HepG2 (cell line): ENCODE measurements at regions of chr3 and their contacts with region 1.

Region 1: DNA sequence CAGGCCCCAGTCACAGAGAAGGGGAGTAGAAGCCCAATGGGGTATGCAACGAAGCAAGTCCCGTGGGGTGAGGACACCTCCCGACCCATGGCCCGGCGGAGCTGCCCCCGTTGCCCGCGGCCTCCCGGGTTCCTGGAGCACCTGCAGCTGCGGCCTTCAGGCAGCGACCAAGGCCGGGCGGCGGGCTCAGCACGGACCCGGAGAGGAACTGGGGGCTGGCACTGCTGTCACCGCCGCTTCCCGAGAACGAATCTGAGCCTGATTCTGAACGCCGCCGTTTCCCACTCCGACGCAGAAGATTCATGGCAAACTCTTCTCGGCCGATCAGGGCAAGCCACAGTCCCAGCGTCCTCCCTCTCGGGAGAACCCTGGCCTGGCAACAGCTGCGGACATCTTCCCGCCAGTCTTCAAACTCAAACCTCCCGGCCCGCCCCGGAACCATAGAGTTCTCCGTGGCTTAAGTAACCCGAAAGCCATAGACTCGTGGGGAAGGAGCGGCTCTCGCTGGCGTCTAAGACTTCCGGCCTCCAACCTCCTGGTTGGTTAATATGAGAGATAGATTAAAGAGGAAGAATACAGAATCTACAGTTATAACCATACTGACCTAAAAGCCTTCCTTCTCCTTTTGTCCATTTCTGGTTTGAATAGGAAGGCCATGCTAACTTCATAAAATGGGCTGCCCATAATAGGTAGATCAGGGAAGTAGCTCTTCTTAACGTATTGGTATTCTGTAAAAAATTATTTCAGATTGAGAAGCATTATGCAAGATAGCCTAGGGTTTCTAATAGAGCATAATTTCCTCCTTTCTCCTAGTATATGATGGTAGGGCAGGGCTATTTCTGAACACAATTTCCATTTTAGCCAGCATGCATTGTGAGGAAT is at the start of gene POLQ:
- DNase-seq: peak; percentile 87
- ATAC-seq: peak; percentile 97
- H3K4me3 ChIP-seq: peak within 1 kb of the TSS; percentile 81 to 96 (median 82)
- H3K27ac ChIP-seq: peak within 1 kb of the TSS; percentile 51
- H3K4me1 ChIP-seq: peaks cover 9% of the 10 kb centered on the region
- H3K27me3 ChIP-seq: no peaks in the 10 kb centered on the region; a peak in 1 of 5 replicates
- CTCF ChIP-seq: no peak
- EP300 ChIP-seq: peak in 1 of 2 experiments; percentile 21; a peak in 1 of 4 replicates
- POLR2A ChIP-seq: peak; percentile 49 to 63; a peak in 2 of 4 replicates
- RAD21 ChIP-seq: no peak
- total RNA-seq, gene POLQ: 16.0 and 18.6 TPM in 2 replicates

Region 2: GRCh38 chr3:121629601-121630000 is 83.8 kb after region 1 on chr3:
- CTCF ChIA-PET with region 1: no interaction called
- POLR2A ChIA-PET with region 1: no interaction called
- in situ Hi-C with region 1: no loop called
- intact Hi-C with region 1: no loop called
- DNase-seq: no peak
- ATAC-seq: no peak
- H3K4me3 ChIP-seq: no peak overlapping the region
- H3K27ac ChIP-seq: no peak overlapping the region
- H3K4me1 ChIP-seq: no peaks in the 10 kb centered on the region
- H3K27me3 ChIP-seq: peaks cover 0 to 3% of the 10 kb centered on the region in 2 experiments; a peak in 1 of 5 replicates
- CTCF ChIP-seq: no peak
- EP300 ChIP-seq: no peak
- POLR2A ChIP-seq: no peak
- RAD21 ChIP-seq: no peak

Region 3: DNA sequence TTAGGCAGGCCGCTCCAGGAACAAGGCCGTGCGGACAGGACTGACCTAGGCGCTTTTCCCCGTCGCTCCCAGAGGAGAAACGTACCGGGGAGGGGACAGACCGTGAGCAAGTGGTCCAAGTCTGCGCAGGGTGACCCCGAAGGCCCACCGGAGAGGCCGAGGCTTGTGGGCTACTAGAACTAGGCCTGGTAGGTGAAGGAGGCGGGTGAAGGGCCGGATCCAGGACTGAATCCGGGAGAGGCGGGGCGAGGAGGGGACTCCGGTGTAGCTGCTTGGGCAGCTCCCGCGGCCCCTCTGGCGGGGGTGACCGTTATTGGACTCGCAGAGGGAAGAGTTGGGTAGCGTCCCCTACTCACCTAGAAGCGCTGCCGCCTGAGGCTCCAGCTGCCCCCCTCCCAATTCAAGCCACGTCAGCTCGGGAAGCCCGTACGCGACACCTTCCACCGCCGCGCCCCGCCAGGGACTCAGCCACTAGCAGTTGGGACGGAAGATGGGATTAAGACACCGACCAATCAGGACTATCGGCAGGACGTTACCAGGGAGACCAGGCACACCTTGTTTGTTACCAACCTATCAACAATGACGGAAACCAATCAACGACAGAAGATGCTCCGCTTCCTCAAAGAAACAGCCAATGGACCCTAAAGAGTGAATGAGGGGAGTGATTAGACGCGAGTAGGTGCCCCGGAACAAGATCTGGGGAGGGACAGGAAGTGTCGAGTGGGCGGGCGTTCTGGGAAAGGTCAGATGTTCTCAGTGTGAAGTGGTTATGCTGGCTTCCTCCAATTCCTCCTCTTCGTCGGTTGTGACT is 203.7 kb after region 1 on chr3 and contains the start of gene GOLGB1:
- CTCF ChIA-PET with region 1: no interaction called
- POLR2A ChIA-PET with region 1: no interaction called
- in situ Hi-C with region 1: no loop called
- intact Hi-C with region 1: loop called (anchors 2 kb)
- DNase-seq: peak; percentile 100
- ATAC-seq: peak; percentile 98
- H3K4me3 ChIP-seq: peak within 1 kb of the TSS; percentile 90 to 97 (median 90)
- H3K27ac ChIP-seq: peak within 1 kb of the TSS; percentile 98
- H3K4me1 ChIP-seq: peaks cover 15% of the 10 kb centered on the region
- H3K27me3 ChIP-seq: no peaks in the 10 kb centered on the region; a peak in 1 of 5 replicates
- CTCF ChIP-seq: no peak
- EP300 ChIP-seq: no peak
- POLR2A ChIP-seq: peak; percentile 96 to 99
- RAD21 ChIP-seq: peak; percentile 53
- total RNA-seq, gene GOLGB1: 39.5 and 53.1 TPM in 2 replicates

Region 4: DNA sequence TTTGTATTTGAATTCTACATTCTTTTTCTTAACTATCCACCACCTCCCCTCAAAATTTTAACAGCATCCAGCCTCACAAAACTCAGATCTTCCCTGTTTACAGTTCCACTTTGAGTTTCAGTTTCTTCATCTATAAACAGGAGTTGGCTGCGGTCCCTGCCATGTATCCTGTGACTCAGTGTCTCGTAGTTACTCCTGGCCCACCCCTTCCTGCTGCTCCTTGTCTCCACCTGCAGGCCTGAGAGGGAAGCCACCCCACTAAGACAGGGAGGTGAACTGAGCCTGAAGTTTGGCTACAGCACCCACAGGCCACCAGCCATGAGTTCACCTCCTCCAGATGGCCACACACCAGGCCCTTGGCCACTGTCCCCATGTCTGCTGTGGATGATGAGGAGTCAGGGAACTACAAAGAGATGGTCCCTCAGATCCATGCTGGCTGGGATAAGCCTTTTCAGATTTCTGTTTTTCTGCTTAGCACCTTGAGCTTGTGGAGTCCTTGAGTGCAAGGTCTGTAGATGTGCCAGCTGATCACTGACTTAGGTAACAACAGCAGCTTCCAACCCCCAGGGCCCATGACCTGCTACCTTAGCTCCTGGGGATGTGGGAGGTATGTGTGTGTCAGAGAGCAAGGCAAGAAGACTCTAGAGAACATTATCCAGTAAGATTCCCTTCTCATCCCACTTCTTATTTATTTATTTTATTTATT is 546.8 kb after region 1 on chr3:
- CTCF ChIA-PET with region 1: no interaction called
- POLR2A ChIA-PET with region 1: no interaction called
- in situ Hi-C with region 1: no loop called
- intact Hi-C with region 1: loop called (anchors 2 kb)
- DNase-seq: no peak
- ATAC-seq: peak; percentile 65
- H3K4me3 ChIP-seq: no peak overlapping the region
- H3K27ac ChIP-seq: no peak overlapping the region
- H3K4me1 ChIP-seq: no peaks in the 10 kb centered on the region
- H3K27me3 ChIP-seq: peaks cover 3 to 6% of the 10 kb centered on the region in 2 experiments; a peak in 3 of 5 replicates
- CTCF ChIP-seq: peak; percentile 57
- EP300 ChIP-seq: no peak
- POLR2A ChIP-seq: no peak
- RAD21 ChIP-seq: no peak

Region 5: DNA sequence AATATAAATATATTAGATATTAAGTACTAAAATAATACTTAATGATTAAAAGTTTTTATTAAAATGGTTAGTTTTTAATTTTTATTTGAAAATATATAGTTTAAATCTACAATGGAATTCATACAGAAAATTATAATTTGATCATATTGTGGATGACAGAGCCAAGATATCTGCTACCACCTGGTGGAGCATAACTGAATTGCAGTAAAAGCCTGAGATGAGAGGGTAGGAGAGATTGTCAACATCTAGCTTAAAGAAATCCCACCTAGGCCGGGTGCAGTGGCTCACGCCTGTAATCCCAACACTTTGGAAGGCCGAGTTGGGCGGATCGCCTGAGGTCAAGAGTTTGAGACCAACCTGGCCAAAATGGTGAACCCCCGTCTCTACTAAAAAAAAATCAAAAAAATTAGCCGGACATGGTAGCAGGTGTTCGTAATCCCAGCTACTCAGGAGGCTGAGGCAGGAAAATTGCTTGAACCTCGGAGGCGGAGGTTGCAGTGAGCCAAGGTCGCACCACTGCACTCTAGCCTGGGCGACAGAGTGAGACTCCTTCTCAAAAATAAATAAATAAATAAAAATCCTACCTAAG is 754.2 kb after region 1 on chr3:
- CTCF ChIA-PET with region 1: interaction called, 7 read pairs
- POLR2A ChIA-PET with region 1: no interaction called
- in situ Hi-C with region 1: no loop called
- intact Hi-C with region 1: loop called (anchors 1 kb)
- DNase-seq: peak; percentile 33
- ATAC-seq: peak; percentile 31; the same call in 1 of the 3 replicates
- H3K4me3 ChIP-seq: no peak overlapping the region
- H3K27ac ChIP-seq: no peak overlapping the region
- H3K4me1 ChIP-seq: peaks cover 6% of the 10 kb centered on the region
- H3K27me3 ChIP-seq: no peaks in the 10 kb centered on the region
- CTCF ChIP-seq: peak; percentile 60
- EP300 ChIP-seq: no peak
- POLR2A ChIP-seq: no peak
- RAD21 ChIP-seq: no peak; the same call in 1 of the 2 replicates

Region 6: GRCh38 chr3:122679085-122679881 is 1133.5 kb after region 1 on chr3:
- CTCF ChIA-PET with region 1: interaction called, 3 read pairs
- POLR2A ChIA-PET with region 1: no interaction called
- in situ Hi-C with region 1: loop called (anchors 25 kb)
- intact Hi-C with region 1: loop called (anchors 10 kb)
- DNase-seq: peak; percentile 64
- ATAC-seq: peak; percentile 79
- H3K4me3 ChIP-seq: peak overlapping the region; percentile 90 to 97 (median 93)
- H3K27ac ChIP-seq: no peak overlapping the region
- H3K4me1 ChIP-seq: peaks cover 29% of the 10 kb centered on the region
- H3K27me3 ChIP-seq: no peaks in the 10 kb centered on the region; a peak in 1 of 5 replicates
- CTCF ChIP-seq: peak; percentile 88
- EP300 ChIP-seq: no peak
- POLR2A ChIP-seq: no peak
- RAD21 ChIP-seq: peak; percentile 83

Region 7: DNA sequence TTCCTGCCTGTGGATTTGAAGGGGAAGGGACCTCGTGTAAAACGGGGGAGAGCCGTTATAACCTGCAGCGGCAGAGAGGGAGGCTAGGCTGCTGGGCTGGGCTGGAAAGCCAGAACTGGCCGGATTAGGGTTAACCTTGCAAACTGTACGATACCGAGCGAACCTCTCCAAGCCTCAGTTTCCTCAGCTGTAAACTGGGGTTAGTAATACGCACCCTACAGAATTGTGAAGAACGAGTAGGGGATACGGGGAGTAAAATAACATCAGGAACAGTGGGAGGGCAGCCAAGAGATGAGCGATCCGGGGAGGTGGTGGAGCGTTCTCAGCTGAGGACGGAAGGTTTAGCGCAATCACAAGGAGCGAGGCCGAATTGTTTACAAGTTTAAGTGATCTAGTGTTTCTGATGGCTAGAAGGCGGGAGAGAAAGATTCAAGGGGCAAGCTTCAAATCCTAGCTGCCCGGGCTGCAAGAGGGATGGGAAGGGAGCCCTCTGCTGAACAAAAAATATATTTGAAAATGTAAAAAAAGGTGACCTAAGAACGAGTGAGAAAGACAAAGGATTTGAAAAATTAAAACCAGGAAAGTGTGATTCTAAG is 1482.5 kb after region 1 on chr3:
- CTCF ChIA-PET with region 1: no interaction called
- POLR2A ChIA-PET with region 1: no interaction called
- in situ Hi-C with region 1: no loop called
- intact Hi-C with region 1: loop called (anchors 2 kb)
- DNase-seq: peak; percentile 13
- ATAC-seq: peak; percentile 39
- H3K4me3 ChIP-seq: peak overlapping the region; percentile 54 to 69 (median 57)
- H3K27ac ChIP-seq: no peak overlapping the region
- H3K4me1 ChIP-seq: peaks cover 33% of the 10 kb centered on the region
- H3K27me3 ChIP-seq: peaks cover 13 to 62% of the 10 kb centered on the region in 2 experiments
- CTCF ChIP-seq: peak; percentile 62
- EP300 ChIP-seq: no peak
- POLR2A ChIP-seq: no peak
- RAD21 ChIP-seq: peak; percentile 22; the same call in 1 of the 2 replicates